H1 (cell line): ENCODE measurements at regions of chr15 and their contacts with region 1.

Region 1: DNA sequence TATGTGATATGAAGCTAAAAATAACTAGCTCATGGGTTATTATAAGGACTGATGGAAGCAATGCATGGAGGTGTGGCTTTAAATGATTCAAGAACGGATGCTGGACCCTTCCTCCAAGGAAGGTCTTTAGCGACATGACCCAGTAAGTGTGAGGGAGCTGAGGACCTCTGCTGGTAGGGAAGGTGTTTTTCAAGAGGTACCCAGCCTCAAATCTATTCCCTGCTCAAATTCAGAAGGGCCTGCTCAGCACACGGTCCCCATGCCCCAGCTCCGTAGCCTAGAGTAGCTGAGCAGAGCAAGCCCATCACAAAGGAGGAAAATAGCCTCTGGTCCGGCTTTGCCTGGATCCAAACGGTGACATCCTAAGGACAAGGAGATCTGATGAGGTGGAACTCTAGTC is 266.2 kb upstream of the IGF1R start:
- DNase-seq: peak; percentile 27 to 47
- H3K4me3 ChIP-seq: no peak overlapping the region
- H3K27ac ChIP-seq: no peak overlapping the region
- H3K4me1 ChIP-seq: peaks cover 0 to 5% (median 2%) of the 10 kb centered on the region in 4 experiments; a peak in 2 of 7 replicates
- H3K27me3 ChIP-seq: no peaks in the 10 kb centered on the region; a peak in 1 of 7 replicates
- CTCF ChIP-seq: peak; percentile 51 to 80 (median 66)
- EP300 ChIP-seq: no peak
- POLR2A ChIP-seq: no peak
- RAD21 ChIP-seq: peak; percentile 69 to 71

Region 2: DNA sequence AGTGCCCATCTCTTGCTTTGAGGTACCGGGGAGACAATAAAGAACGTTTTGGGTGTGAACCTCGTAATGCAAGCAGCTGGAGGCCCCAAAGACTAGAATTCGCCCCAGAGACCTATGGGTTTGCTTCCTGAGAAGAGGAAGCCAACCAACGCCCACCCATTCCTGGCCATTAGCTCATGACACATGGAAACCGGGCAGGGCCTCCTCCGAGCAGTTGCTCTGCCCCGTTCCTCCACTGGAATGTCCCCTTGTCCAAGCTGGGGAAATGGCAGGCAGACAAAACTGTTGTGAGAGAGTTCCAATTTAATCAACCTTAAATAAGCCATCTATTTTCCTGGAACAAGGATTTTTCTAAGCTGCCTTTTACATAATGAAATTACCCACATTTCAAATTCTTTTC is 15.3 kb after region 1 on chr15:
- CTCF ChIA-PET with region 1: interaction called, 21 read pairs
- POLR2A ChIA-PET with region 1: no interaction called
- DNase-seq: no peak
- H3K4me3 ChIP-seq: no peak overlapping the region
- H3K27ac ChIP-seq: no peak overlapping the region
- H3K4me1 ChIP-seq: peaks cover 0 to 6% (median 0%) of the 10 kb centered on the region in 4 experiments; a peak in 3 of 7 replicates
- H3K27me3 ChIP-seq: no peaks in the 10 kb centered on the region
- CTCF ChIP-seq: no peak
- EP300 ChIP-seq: no peak
- POLR2A ChIP-seq: no peak
- RAD21 ChIP-seq: no peak

Region 3: DNA sequence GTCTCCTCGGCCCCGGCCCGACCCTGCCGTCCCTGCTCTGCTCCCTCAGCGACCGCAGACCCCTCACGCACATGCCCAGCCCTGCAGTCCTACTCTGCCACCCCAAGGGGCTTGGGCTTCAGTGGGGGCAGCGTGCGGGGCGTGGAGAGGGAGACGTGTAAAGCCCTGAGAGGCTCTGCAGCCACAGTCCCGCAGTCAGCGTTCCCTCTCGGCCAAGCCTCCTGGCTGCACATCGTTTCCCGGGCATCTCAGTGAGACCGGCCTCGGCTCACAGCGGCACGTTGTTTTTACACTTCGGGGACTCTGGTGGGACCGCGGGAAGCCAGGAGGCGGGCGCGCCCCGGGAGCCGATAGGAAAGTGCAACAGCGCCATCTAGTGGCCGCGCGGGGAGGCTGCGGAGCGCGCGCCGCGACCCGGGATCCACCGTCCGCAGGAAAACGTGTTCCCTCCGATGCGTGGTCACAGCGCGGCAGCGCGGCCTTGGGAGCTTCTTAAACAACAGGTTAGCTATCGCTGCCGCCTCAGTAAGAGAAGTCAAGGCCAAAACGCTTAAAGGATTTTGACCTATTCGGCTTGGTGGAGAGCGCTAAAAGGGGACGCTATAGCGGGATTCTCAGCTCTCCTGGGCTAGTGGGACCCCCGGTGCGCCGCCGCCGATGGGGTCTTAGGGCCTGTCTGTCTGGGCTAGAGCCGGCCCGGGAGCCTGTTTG is 39.4 kb after region 1 on chr15:
- CTCF ChIA-PET with region 1: interaction called, 12 read pairs
- POLR2A ChIA-PET with region 1: no interaction called
- DNase-seq: peak; percentile 39 to 96
- H3K4me3 ChIP-seq: peak overlapping the region in 3 of 4 experiments; percentile 40 to 57 (median 54); a peak in 7 of 8 replicates
- H3K27ac ChIP-seq: no peak overlapping the region
- H3K4me1 ChIP-seq: peaks cover 0 to 6% (median 3%) of the 10 kb centered on the region in 4 experiments; a peak in 4 of 7 replicates
- H3K27me3 ChIP-seq: peaks cover 13 to 35% (median 28%) of the 10 kb centered on the region in 4 experiments
- CTCF ChIP-seq: peak; percentile 87 to 92 (median 88)
- EP300 ChIP-seq: no peak
- POLR2A ChIP-seq: no peak
- RAD21 ChIP-seq: peak; percentile 95 to 97

Region 4: DNA sequence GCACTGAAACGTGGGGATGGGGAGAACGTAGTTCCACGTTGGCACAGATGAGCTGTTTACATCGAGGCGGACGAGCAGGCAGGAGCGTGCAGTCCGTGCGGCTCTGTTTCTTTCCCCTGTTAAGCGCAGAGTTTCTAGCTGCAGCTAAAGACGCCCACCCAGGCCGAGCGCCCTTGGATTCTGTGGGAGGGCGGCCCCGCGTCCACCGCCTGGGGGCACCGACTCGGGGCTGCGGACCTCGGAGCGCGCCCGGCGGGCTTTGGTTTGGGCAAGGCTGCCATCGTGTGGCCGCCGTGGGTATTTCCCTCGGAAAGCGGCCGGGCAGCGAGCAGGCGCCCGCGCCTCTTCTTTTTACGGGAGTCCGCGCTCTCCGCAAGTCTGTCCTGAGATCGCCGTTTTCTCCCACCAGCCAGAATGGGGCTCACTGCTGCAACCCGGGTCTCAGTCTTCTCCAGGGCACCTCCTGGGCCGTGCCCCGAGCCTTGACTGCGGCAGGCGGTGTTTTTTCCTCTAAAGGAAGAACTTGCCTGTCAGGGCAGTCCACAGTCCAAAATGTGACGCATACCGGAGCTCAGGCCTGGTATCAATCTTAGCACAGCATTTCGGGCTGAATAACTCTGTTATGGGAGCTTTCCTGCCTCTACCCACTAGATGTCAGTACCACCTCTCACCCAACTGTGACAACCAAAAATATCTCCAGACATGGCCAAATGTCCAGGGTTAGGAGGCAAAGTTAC is 46.3 kb after region 1 on chr15:
- CTCF ChIA-PET with region 1: interaction called, 10 read pairs
- POLR2A ChIA-PET with region 1: no interaction called
- DNase-seq: peak; percentile 49 to 97
- H3K4me3 ChIP-seq: peak overlapping the region; percentile 11 to 54 (median 24); a peak in 5 of 8 replicates
- H3K27ac ChIP-seq: no peak overlapping the region
- H3K4me1 ChIP-seq: peaks cover 0 to 2% (median under 1%) of the 10 kb centered on the region in 4 experiments; a peak in 2 of 7 replicates
- H3K27me3 ChIP-seq: peaks cover 3 to 26% (median 18%) of the 10 kb centered on the region in 4 experiments
- CTCF ChIP-seq: peak; percentile 63 to 90 (median 66)
- EP300 ChIP-seq: no peak
- POLR2A ChIP-seq: no peak
- RAD21 ChIP-seq: peak; percentile 72 to 87

Region 5: GRCh38 chr15:98513428-98513991 is 131.4 kb after region 1 on chr15:
- CTCF ChIA-PET with region 1: no interaction called
- POLR2A ChIA-PET with region 1: no interaction called
- DNase-seq: no peak
- H3K4me3 ChIP-seq: no peak overlapping the region
- H3K27ac ChIP-seq: no peak overlapping the region
- H3K4me1 ChIP-seq: no peaks in the 10 kb centered on the region
- H3K27me3 ChIP-seq: no peaks in the 10 kb centered on the region
- CTCF ChIP-seq: no peak
- EP300 ChIP-seq: no peak
- POLR2A ChIP-seq: no peak
- RAD21 ChIP-seq: no peak

Region 6: DNA sequence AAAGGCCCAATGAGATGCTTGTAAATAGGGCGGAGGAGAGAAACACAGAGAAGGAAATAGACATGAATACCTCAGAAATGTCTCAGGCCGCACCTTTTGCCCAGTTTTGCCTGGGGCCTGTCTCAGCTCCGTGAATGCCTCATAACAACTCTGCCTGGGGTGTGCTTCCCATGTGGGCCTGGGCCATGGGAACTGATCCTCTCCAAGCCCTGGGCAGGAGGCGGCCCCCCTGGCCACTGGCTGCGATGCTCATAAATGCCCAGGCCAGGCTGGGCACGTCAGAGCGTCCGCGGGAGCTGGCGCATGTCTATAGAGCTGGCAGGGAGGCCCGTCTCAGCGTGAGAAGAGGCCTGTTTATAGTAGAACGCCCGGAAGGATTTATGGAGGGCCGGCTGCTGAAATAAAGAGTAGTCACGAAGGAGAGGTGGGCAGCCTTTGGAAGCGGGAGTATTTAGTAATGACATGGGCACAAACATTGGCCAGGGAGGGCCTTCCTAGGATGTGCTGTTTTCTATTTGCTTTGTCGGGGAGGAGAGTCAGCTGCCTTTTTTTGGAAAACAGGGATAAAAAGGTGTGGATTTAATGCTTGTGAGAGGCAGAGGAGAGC is 180.3 kb after region 1 on chr15:
- CTCF ChIA-PET with region 1: no interaction called
- POLR2A ChIA-PET with region 1: no interaction called
- DNase-seq: no peak
- H3K4me3 ChIP-seq: no peak overlapping the region
- H3K27ac ChIP-seq: no peak overlapping the region
- H3K4me1 ChIP-seq: peaks cover 0 to 2% (median 0%) of the 10 kb centered on the region in 4 experiments; a peak in 2 of 7 replicates
- H3K27me3 ChIP-seq: no peaks in the 10 kb centered on the region; a peak in 1 of 7 replicates
- CTCF ChIP-seq: no peak
- EP300 ChIP-seq: no peak
- POLR2A ChIP-seq: no peak
- RAD21 ChIP-seq: no peak